ENCODE measurements at regions of chrX and their contacts with region 1.

Region 1: GRCh38 chrX:107716816-107717700 is 58.5 kb downstream of the TSC22D3 start:
- DNase-seq: peak; percentile 92
- H3K4me3 Mint-ChIP-seq: peak overlapping the region; percentile 92
- H3K27ac Mint-ChIP-seq: peak overlapping the region; percentile 96
- H3K4me1 Mint-ChIP-seq: peaks cover 56% of the 10 kb centered on the region
- H3K27me3 Mint-ChIP-seq: peaks cover 12% of the 10 kb centered on the region

Region 2: DNA sequence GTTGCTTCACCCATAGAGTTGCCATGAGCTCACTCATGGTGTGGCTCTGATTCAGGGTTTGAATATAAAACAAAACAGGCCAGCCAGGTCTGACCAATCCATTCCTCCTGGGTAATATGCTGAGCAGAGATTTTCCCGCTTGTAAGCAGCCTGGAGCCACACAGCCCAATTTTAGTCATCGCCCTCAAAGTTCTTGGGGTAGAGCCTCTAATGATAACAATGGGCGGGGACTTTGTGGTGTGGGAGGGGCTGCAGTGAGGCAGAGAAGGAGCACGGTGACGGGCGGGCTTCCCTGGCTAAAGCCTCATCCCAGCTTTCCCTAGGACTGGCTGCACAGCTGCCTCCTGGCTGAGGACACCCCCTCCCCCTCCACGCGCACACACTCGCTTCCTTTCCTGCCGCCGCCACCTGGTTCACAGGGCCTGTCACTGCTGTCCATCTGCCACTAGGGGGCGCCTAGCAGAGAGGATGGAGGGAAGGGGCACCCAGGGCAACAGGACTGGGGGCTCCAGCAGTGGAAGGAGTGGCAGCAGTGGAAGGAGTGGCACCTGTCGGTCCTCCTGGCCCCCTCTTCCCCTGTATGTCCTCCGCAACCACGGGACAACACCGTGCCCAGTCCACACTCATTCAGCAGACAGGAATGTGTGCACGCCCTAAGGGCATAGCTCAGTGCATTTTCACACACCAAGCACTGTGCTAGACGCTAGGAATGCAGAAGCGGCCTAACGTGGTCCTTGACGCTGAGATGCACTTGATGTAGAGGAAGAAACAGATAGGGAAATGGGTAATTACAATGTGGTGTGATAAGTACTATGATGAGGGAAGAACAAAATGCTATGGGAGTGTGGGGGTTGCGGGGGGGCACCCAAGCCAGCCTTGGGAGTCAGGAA is 61.9 kb before region 1 on chrX:
- CTCF ChIA-PET with region 1: interaction called, 14 read pairs
- DNase-seq: peak; percentile 74
- H3K4me3 Mint-ChIP-seq: peak overlapping the region; percentile 2
- H3K27ac Mint-ChIP-seq: no peak overlapping the region
- H3K4me1 Mint-ChIP-seq: peaks cover 11% of the 10 kb centered on the region
- H3K27me3 Mint-ChIP-seq: no peaks in the 10 kb centered on the region

Region 3: GRCh38 chrX:107760304-107761077 is 43.4 kb after region 1 on chrX:
- CTCF ChIA-PET with region 1: no interaction called
- DNase-seq: no peak
- H3K4me3 Mint-ChIP-seq: no peak overlapping the region
- H3K27ac Mint-ChIP-seq: no peak overlapping the region
- H3K4me1 Mint-ChIP-seq: peaks cover 6% of the 10 kb centered on the region
- H3K27me3 Mint-ChIP-seq: no peaks in the 10 kb centered on the region

Region 4: DNA sequence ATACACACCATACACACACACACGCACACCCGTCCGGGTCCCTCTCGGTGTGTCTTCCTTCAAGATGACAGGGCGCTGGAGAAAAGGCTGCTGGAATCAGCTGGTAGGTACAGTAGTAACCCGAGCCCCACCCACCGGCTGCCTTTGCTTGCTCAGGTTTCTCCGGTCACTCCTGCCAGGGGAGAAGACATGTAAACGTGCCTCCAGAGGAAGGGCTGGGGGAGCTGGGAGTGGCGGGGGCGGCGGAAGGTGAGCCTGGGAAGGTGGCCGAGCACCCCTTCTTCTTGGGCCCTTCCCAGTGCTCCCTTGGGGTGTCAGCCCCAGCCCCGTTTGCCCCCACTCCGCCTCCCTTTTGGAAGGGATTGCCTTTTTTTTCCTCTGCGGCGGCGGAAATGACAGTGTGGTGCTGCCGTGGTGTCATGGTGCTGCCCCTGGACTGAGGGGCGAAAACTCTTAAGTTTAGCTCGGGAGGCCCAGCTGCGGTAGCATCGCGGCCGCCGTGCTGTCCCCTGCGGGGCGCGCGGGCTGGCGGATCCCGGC is 108.7 kb after region 1 on chrX and contains the start of gene MID2:
- CTCF ChIA-PET with region 1: no interaction called
- DNase-seq: peak; percentile 67
- H3K4me3 Mint-ChIP-seq: peak within 1 kb of the TSS; percentile 76
- H3K27ac Mint-ChIP-seq: peak within 1 kb of the TSS; percentile 73
- H3K4me1 Mint-ChIP-seq: peaks cover 23% of the 10 kb centered on the region
- H3K27me3 Mint-ChIP-seq: peaks cover 16% of the 10 kb centered on the region

Measured in activated naive CD4-positive, alpha-beta T cell treated with anti-CD3 and anti-CD28 coated beads, Interleukin-2, amount 10 ng/mL, durations not matched to agents 7 days and 5 days (primary cell).